ENCODE measurements at regions of chr3 and their contacts with region 1.

Region 1: DNA sequence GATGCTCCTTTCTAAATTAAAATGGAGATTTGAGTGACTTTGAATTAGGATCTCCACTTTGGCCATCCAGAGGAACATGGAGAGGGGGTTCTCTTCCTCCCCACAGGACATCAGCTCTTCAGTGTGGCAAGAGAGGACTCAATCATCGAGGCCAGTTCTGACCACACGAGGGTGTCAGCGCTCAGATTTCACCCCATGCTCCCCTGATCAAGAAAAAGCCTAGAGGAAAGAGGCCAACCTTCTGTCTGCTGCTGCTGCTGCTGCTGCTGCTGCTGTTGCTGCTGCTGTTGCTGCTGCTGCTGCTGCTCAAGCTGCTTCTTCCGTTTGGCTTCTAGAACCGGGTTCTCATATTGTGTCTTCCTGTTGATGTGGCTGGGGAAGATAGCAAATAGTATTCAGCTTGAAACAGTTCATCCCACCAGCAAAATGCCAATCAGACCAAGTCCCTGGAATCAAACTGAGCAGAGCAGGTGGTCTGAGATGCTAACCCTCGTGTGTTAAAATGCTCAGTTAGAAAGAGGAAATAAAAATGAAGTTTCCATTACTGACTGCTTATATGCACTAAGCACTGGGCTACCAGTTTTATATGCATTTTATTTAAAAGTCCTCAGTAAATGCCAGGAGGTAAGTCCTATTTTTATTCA is 599.0 kb downstream of the MAGI1 start:
- ATAC-seq: peak; percentile 89 to 99 (median 98)
- H3K4me3 ChIP-seq: no peak overlapping the region
- H3K27ac ChIP-seq: no peak overlapping the region
- H3K4me1 ChIP-seq: peaks cover 0 to 11% of the 10 kb centered on the region in 2 donors

Region 2: DNA sequence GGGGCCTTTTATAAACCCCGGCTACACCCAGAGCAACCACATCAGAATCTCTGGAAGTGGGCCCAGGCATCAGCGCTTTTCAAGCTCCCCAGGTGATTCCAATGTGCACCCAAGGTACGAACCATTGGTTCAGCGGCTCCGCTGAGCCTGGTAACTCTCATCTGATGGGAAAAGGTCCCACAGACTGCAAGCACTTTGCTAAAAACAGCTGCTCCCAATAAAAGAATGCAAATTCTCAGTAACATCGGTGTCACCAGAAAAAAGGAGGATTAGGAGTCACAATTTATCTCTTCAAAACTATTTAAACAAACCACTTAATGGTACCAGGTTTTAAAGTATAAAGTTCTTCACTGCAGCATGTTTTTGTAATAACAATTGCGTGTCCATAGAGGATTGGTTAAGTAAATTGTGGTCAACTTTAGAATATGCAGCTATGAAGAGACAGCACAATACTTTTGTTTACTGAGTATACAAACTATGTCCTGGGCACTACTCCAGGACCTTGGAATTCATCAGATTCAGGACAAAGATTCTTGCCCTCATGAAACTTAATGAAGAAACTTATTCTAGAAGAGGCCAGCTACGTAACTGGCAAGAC is 91.3 kb before region 1 on chr3:
- in situ Hi-C with region 1: no loop called
- ATAC-seq: peak in 4 of 8 experiments; percentile 84 to 96 (median 94)
- H3K4me3 ChIP-seq: no peak overlapping the region
- H3K27ac ChIP-seq: no peak overlapping the region
- H3K4me1 ChIP-seq: peaks cover 0 to 11% of the 10 kb centered on the region in 2 donors

Region 3: DNA sequence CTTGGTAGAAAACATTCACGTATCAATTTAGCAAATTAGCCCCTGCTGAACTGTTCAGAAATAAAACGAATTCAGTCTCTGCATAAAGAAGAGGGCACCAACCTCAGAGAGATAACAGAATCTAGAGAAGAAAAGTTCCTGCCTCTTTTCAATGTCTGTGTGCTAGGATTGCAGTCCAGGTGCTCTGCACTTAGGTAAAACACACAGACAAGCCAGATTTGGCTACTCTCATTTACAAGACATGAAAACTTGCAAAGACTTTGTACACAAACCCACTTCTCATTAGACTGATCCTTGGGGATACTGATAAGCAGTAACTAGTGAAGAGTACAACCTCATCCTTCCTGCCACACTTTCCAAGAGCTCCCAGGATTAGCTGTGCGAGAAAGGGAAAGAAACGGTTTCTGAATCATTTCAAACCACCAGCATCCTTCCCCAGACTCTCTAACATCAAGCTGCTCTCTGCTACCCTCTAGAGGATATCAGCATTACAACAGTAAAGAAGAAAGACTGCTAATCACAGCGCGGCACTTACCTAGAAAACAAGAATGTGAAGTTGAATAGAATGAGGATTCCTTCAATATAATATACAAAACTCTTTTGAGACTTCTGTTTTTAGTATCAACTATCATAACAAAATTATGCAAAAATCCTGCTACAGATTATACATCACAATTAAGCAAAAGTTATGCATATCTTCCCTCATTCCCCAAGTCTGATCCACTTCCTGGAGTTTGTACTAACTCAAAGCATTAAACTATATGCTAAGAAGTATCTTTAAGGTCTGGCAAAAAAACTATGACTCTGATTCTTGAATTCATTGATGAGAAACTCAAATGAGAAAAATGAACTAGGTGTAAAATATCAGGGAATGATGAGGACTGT is 292.5 kb after region 1 on chr3:
- in situ Hi-C with region 1: loop called in 3 of 9 experiments (anchors 25 kb)
- ATAC-seq: peak; percentile 79 to 92 (median 86)
- H3K4me3 ChIP-seq: no peak overlapping the region
- H3K27ac ChIP-seq: no peak overlapping the region
- H3K4me1 ChIP-seq: peaks cover 11 to 16% of the 10 kb centered on the region in 2 donors

Measured in motor neuron (in vitro differentiated cells).